GM12878 (cell line): ENCODE measurements at regions of chr18 and their contacts with region 1.

Region 1: DNA sequence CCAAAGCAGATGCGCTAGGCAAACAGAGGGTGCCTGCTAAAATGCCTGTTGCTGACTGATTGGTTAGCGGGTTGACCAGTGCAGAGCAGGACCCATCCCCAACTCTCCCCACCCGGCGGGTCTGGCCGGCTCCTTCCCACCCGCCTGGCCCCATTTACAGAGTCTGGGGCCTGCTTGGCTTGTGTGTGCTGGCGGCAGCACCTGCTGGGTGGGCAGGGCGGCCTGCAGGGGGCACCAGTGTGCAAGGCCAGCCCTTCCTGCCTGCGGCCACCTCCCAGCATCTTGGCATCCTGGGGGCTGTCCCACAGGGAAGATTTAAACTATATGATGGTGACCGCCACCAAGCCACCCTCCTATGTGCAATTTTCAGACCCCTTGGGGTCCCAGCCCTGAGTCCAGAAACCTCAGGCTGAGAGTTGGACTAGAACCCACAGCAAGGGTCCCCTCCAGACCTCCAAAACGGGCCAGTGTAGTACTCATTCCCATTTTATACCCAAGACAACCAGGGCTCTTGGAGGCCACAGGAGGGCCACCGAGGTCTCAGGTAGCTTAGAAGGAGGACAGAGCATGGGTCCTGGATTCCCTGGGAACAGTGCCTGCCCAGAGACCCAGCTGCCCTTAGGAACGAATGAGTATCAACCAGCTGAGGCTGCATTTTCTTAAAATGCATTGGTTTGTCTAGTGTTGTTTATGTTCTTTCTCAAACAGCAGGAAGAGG is 173.6 kb downstream of the SMAD7 start:
- DNase-seq: no peak
- ATAC-seq: peak; percentile 86
- H3K4me3 ChIP-seq: no peak overlapping the region
- H3K27ac ChIP-seq: peak overlapping the region; percentile 60
- H3K4me1 ChIP-seq: peaks cover 40% of the 10 kb centered on the region
- H3K27me3 ChIP-seq: no peaks in the 10 kb centered on the region
- CTCF ChIP-seq: peak; percentile 93 to 95 (median 94)
- EP300 ChIP-seq: no peak
- POLR2A ChIP-seq: no peak
- RAD21 ChIP-seq: peak; percentile 83

Region 2: GRCh38 chr18:48750485-48751175 is 26.6 kb before region 1 on chr18:
- CTCF ChIA-PET with region 1: interaction called, 9 read pairs
- POLR2A ChIA-PET with region 1: no interaction called
- RAD21 ChIA-PET with region 1: interaction called, 16 read pairs
- SMC1A ChIA-PET with region 1: interaction called, 7 read pairs
- in situ Hi-C with region 1: no loop called
- intact Hi-C with region 1: no loop called
- DNase-seq: no peak
- ATAC-seq: no peak
- H3K4me3 ChIP-seq: no peak overlapping the region
- H3K27ac ChIP-seq: no peak overlapping the region
- H3K4me1 ChIP-seq: peaks cover 28% of the 10 kb centered on the region
- H3K27me3 ChIP-seq: no peaks in the 10 kb centered on the region
- CTCF ChIP-seq: no peak
- EP300 ChIP-seq: no peak
- POLR2A ChIP-seq: no peak
- RAD21 ChIP-seq: no peak

Region 3: DNA sequence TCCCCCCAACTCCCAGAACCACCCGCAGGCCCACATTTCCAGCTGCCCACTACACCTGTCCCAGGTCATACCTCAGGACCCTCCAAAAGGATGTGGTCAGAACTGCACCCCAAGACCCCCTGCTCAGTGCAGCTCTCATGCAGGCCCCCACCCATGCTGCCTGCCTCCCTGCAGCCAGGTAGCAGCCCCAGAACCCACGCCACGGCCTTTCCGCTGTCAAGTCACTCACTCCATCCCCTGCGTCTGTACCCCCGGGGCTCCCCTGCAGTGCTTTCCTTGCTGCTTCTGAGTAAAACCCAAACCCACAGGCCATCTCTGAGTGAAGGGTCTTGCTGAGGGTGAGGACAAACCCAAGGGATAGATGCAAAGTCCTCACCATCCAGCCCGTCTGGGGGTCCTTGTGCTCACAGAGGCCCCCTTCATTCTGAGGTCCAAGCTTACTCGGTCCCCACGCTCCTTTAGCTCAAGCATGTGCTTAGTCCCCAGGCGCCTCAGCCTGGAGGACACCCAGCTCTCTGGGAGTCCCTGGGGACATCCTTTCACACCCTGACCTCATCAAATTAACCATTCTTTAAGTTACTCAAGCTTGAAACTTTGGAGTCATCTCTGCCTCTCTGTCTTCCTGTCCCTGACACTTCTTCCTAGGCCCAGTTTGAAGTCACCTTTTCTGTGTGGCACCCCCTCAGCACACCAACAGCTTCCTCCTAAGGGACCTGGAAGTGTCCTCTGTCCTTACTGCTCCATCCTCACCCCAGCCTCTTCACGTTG is 43.5 kb after region 1 on chr18:
- CTCF ChIA-PET with region 1: interaction called, 21 read pairs
- POLR2A ChIA-PET with region 1: interaction called, 3 read pairs
- RAD21 ChIA-PET with region 1: interaction called, 48 read pairs
- SMC1A ChIA-PET with region 1: interaction called, 54 read pairs
- in situ Hi-C with region 1: no loop called
- intact Hi-C with region 1: no loop called
- DNase-seq: peak; percentile 93
- ATAC-seq: peak; percentile 95
- H3K4me3 ChIP-seq: no peak overlapping the region
- H3K27ac ChIP-seq: peak overlapping the region; percentile 60
- H3K4me1 ChIP-seq: peaks cover 20% of the 10 kb centered on the region
- H3K27me3 ChIP-seq: no peaks in the 10 kb centered on the region
- CTCF ChIP-seq: no peak
- EP300 ChIP-seq: peak; percentile 51 to 83
- POLR2A ChIP-seq: no peak
- RAD21 ChIP-seq: peak; percentile 9; the same call in 1 of the 2 replicates

Region 4: DNA sequence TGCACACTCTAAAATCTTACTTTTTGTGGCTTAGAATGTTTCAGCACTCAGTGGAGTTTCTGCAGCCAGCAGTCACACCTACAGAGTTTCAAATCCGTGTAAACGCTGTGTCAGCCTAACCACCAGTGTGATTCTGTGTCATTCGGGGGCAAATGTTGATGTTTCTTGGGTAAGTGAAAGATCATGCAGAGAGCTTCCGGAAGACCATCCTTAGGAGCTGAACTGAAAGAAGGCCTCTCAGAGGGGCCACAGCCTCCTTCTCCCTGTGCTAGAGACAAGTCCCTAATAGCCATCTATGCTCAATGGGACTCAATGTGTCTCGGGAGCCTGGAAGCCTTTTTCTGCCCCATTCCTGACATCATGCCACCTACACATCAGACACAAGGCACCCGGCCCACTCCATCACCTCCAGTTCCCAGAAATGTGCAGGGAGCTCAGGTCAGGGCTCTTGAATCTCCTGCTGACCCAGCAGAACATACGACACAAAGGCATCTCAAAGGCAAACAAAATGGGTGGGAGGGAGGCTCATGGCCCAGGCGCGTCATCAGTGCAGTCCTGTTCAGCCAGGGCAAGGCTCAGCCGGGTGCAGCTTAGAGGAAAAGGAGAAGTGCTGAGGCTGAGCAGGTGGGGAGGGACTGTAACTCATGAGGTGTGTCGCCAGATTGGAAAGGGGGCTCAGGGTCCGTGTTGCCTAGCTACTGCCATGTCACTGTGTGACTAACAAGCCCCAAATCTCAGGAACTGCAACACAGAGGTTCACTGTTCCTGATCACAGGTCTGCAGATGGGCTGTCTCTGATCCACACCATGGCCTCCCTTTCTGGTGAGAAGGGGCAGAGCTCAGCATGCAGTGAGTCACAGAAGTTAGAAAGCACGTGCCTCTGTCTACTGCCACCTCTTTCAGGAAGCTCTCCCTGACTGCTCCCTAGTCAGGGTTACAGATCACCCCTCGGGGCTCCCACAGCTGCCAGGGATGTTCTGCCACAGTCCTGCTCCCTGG is 91.6 kb after region 1 on chr18:
- CTCF ChIA-PET with region 1: interaction called, 31 read pairs
- POLR2A ChIA-PET with region 1: no interaction called
- RAD21 ChIA-PET with region 1: interaction called, 36 read pairs
- SMC1A ChIA-PET with region 1: interaction called, 30 read pairs
- in situ Hi-C with region 1: no loop called
- intact Hi-C with region 1: no loop called
- DNase-seq: peak; percentile 96
- ATAC-seq: peak; percentile 92
- H3K4me3 ChIP-seq: 0 out of 2 replicates have a peak overlapping the region, but pooled peaks have one; percentile 20
- H3K27ac ChIP-seq: peak overlapping the region; percentile 97
- H3K4me1 ChIP-seq: peaks cover 29% of the 10 kb centered on the region
- H3K27me3 ChIP-seq: no peaks in the 10 kb centered on the region
- CTCF ChIP-seq: no peak
- EP300 ChIP-seq: peak; percentile 84 to 93
- POLR2A ChIP-seq: peak; percentile 73
- RAD21 ChIP-seq: peak; percentile 28; the same call in 1 of the 2 replicates

Region 5: GRCh38 chr18:48934723-48935432 is 157.7 kb after region 1 on chr18:
- CTCF ChIA-PET with region 1: interaction called, 6 read pairs
- POLR2A ChIA-PET with region 1: interaction called, 7 read pairs
- RAD21 ChIA-PET with region 1: interaction called, 23 read pairs
- SMC1A ChIA-PET with region 1: interaction called, 21 read pairs
- in situ Hi-C with region 1: no loop called
- intact Hi-C with region 1: no loop called
- DNase-seq: peak; percentile 71
- ATAC-seq: peak; percentile 71
- H3K4me3 ChIP-seq: peak overlapping the region; percentile 57
- H3K27ac ChIP-seq: peak overlapping the region; percentile 96
- H3K4me1 ChIP-seq: peaks cover 68% of the 10 kb centered on the region
- H3K27me3 ChIP-seq: no peaks in the 10 kb centered on the region
- CTCF ChIP-seq: no peak
- EP300 ChIP-seq: no peak; a peak in 1 of 4 replicates
- POLR2A ChIP-seq: peak; percentile 62; the same call in 1 of the 2 replicates
- RAD21 ChIP-seq: no peak

Region 6: DNA sequence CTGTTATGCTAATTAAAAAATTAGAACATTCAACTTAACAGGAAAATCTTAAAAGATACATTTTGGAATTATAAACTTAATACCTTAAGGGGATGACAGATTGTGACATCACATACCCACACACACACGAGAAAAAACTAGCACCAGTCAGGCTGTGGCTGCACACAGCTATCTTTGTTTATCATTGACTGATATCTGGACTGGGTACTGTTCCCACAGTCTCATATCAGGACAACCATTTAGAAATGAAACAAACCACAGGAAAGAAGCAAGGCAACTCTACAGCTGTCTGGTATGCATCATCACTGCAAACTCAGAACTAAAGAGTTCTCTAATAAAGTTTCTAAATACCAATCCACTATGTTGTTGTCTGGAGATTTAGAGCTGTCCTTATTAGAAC is 384.4 kb after region 1 on chr18:
- CTCF ChIA-PET with region 1: interaction called, 26 read pairs
- POLR2A ChIA-PET with region 1: no interaction called
- RAD21 ChIA-PET with region 1: interaction called, 21 read pairs
- SMC1A ChIA-PET with region 1: interaction called, 12 read pairs
- in situ Hi-C with region 1: no loop called
- intact Hi-C with region 1: no loop called
- DNase-seq: peak; percentile 90
- ATAC-seq: peak; percentile 96
- H3K4me3 ChIP-seq: no peak overlapping the region
- H3K27ac ChIP-seq: peak overlapping the region; percentile 71
- H3K4me1 ChIP-seq: peaks cover 35% of the 10 kb centered on the region
- H3K27me3 ChIP-seq: no peaks in the 10 kb centered on the region
- CTCF ChIP-seq: no peak
- EP300 ChIP-seq: peak; percentile 97 to 99
- POLR2A ChIP-seq: no peak
- RAD21 ChIP-seq: no peak